Activated B cell treated with CpG ODN at 0.5 μM for 24 hours (primary cell): ENCODE measurements at regions of chr14 and their contacts with region 1.

Region 1: DNA sequence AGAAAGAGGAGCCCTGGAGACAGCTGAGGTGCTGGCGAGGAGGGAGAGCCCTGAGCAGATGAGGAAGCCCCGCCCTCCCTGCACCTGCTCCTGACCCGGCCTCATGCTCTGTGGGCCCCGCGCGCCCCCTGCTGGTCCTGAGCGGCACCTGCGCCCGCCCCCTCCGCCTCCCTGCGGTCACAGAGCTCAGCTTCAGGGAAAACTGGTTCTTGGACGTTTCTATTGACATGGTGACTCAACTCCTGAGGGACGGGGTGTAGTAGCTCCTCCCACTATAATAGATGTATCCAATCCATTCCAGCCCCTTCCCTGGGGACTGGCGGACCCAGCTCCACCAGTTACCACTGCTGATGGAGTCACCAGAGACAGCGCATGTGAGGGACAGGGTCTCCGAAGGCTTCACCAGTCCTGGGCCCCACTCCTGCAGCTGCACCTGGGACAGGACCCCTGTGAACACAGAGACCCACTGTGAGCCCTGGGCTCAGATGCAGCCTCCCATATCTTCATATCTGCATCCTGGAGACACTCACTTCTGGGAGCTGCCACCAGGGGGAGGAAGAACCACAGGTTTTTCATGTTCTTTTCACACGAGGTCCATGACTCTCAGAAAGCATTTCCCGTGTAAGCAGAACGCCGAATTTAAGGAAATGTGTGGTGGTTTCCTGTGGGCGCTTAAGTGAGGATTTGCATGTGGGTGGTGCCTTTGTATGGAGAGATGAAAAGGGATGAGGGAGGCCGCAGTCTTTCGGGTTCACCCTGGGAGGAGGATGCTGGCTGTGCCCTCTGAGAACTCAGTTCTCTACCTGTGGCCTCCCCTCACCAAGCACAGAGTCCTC is 1346.4 kb downstream of the TMEM121 start:
- DNase-seq: peak; percentile 89
- ATAC-seq: peak; percentile 83
- H3K4me3 Mint-ChIP-seq: peak overlapping the region; percentile 59
- H3K27ac Mint-ChIP-seq: peak overlapping the region; percentile 21
- H3K4me1 Mint-ChIP-seq: peaks cover 42% of the 10 kb centered on the region
- H3K27me3 Mint-ChIP-seq: peaks cover 12% of the 10 kb centered on the region
- CTCF ChIP-seq: peak; percentile 86

Region 2: DNA sequence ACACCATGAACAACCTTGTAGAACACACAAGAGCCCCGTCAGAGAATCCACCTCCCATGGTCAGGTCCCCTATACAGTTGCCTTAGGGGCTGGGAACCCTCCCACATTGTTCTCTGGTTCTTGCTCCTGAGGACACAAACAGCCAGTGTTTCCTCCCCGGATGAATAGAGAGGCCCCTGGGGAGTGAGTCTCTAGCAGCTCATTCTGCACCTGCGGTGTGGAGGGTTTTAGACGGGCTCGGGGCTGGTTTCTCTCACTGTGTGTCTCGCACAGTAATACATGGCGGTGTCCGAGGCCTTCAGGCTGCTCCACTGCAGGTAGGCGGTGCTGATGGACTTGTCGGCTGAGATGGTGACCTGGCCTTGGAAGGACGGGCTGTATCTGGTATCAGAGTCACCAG is 294.3 kb before region 1 on chr14:
- CTCF ChIA-PET with region 1: no interaction called
- POLR2A ChIA-PET with region 1: no interaction called
- intact Hi-C with region 1: no loop called
- DNase-seq: peak; percentile 33
- ATAC-seq: peak; percentile 92
- H3K4me3 Mint-ChIP-seq: peak overlapping the region; percentile 57
- H3K27ac Mint-ChIP-seq: no peak overlapping the region
- H3K4me1 Mint-ChIP-seq: peaks cover 26% of the 10 kb centered on the region
- H3K27me3 Mint-ChIP-seq: peaks cover 6% of the 10 kb centered on the region
- CTCF ChIP-seq: no peak

Region 3: DNA sequence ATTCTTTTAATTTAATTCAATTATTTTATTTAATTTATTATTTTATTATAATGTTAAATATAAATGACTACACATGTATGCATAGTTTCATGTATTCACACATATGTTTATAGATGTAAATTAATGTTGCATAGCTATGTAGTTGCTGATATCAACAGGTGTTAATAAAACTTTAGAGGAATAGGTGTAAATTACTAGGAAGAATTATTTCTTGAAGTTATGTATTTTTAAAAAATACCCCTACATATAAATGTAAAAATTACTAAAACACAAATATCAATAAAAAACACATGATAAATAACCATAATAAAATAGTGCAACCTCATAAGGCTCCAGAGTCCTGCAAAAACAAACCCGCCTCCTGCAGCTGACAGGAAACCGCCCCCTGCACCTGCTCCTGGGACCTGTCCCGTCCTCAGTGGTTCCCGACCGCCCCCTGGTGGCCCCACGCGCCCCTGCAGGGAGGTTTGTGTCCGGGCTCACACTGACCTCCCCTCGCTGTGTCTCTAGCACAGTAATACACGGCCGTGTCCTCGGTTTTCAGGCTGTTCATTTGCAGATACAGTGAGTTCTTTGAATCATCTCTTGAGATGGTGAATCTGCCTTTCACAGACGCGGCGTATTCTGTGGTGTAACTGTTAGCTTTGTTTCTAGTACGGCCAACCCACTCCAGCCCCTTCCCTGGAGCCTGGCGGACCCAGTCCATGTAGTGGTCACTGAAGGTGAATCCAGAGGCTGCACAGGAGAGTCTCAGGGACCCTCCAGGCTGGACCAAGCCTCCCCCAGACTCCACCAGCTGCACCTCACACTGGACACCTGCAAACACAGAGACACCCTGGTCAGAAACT is 82.4 kb before region 1 on chr14:
- CTCF ChIA-PET with region 1: interaction called, 28 read pairs
- POLR2A ChIA-PET with region 1: no interaction called
- intact Hi-C with region 1: loop called (anchors 1 kb)
- DNase-seq: peak; percentile 83
- ATAC-seq: peak; percentile 85
- H3K4me3 Mint-ChIP-seq: no peak overlapping the region
- H3K27ac Mint-ChIP-seq: no peak overlapping the region
- H3K4me1 Mint-ChIP-seq: peaks cover 15% of the 10 kb centered on the region
- H3K27me3 Mint-ChIP-seq: peaks cover 3% of the 10 kb centered on the region
- CTCF ChIP-seq: peak; percentile 69

Region 4: DNA sequence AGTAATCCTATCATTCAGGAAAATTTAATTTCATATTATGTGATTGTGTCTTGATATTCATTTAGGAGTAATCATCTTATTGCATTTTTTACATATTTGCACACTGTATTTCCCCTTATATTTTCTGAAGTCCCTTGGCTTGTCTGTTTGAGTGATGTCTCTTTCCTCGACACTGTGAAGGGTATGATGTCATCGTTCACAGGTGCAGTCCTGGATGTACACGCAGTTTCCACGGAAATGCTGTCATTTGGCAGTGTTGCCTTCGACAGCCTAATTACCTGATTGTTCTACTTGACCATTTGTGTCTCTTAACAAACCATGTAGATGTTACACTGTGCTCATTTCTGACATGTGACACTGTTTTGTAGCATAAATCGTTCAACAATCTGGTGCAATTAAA is 69.5 kb before region 1 on chr14:
- CTCF ChIA-PET with region 1: interaction called, 12 read pairs
- POLR2A ChIA-PET with region 1: no interaction called
- intact Hi-C with region 1: no loop called
- DNase-seq: no peak
- ATAC-seq: no peak
- H3K4me3 Mint-ChIP-seq: no peak overlapping the region
- H3K27ac Mint-ChIP-seq: no peak overlapping the region
- H3K4me1 Mint-ChIP-seq: no peaks in the 10 kb centered on the region
- H3K27me3 Mint-ChIP-seq: peaks cover 14% of the 10 kb centered on the region
- CTCF ChIP-seq: no peak

Region 5: DNA sequence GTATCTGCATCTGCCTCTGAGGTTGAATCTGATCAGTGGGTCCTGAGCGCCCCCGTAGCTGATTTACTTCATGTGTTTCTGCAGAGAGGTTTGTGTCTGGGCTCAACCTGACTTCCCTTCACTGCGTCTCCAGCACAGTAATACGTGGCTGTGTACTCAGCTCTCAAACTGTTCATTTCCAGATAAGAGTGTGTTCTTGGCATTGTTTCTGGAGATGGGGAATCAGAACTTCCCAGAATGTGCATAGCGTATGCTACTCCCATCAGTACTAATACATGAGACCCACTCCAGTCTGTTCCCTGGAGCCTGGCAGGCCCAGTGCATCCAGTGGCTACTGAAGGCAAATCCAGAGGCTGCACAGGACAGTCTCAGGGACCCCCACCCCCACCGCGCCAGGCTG is 49.3 kb before region 1 on chr14:
- CTCF ChIA-PET with region 1: interaction called, 15 read pairs
- POLR2A ChIA-PET with region 1: no interaction called
- intact Hi-C with region 1: no loop called
- DNase-seq: no peak
- ATAC-seq: no peak
- H3K4me3 Mint-ChIP-seq: no peak overlapping the region
- H3K27ac Mint-ChIP-seq: no peak overlapping the region
- H3K4me1 Mint-ChIP-seq: peaks cover 8% of the 10 kb centered on the region
- H3K27me3 Mint-ChIP-seq: no peaks in the 10 kb centered on the region
- CTCF ChIP-seq: no peak

Region 6: GRCh38 chr14:106831322-106831720 is 41.5 kb before region 1 on chr14:
- CTCF ChIA-PET with region 1: interaction called, 398 read pairs
- POLR2A ChIA-PET with region 1: interaction called, 7 read pairs
- intact Hi-C with region 1: loop called (anchors 1 kb)
- DNase-seq: peak; percentile 37
- ATAC-seq: peak; percentile 67
- H3K4me3 Mint-ChIP-seq: no peak overlapping the region
- H3K27ac Mint-ChIP-seq: no peak overlapping the region
- H3K4me1 Mint-ChIP-seq: peaks cover 12% of the 10 kb centered on the region
- H3K27me3 Mint-ChIP-seq: no peaks in the 10 kb centered on the region
- CTCF ChIP-seq: no peak

Region 7: GRCh38 chr14:106844608-106845285 is 28.1 kb before region 1 on chr14:
- CTCF ChIA-PET with region 1: interaction called, 398 read pairs
- POLR2A ChIA-PET with region 1: interaction called, 41 read pairs
- intact Hi-C with region 1: loop called (anchors 1 kb)
- DNase-seq: peak; percentile 70
- ATAC-seq: peak; percentile 75
- H3K4me3 Mint-ChIP-seq: peak overlapping the region; percentile 96
- H3K27ac Mint-ChIP-seq: peak overlapping the region; percentile 97
- H3K4me1 Mint-ChIP-seq: peaks cover 73% of the 10 kb centered on the region
- H3K27me3 Mint-ChIP-seq: no peaks in the 10 kb centered on the region
- CTCF ChIP-seq: no peak

Region 8: GRCh38 chr14:106850913-106851825 is 21.7 kb before region 1 on chr14:
- CTCF ChIA-PET with region 1: interaction called, 398 read pairs
- POLR2A ChIA-PET with region 1: interaction called, 41 read pairs
- intact Hi-C with region 1: loop called (anchors 1 kb)
- DNase-seq: peak; percentile 44
- ATAC-seq: peak; percentile 78
- H3K4me3 Mint-ChIP-seq: peak overlapping the region; percentile 90
- H3K27ac Mint-ChIP-seq: peak overlapping the region; percentile 97
- H3K4me1 Mint-ChIP-seq: peaks cover 78% of the 10 kb centered on the region
- H3K27me3 Mint-ChIP-seq: no peaks in the 10 kb centered on the region
- CTCF ChIP-seq: no peak